CD8-positive, alpha-beta T cell (primary cell): ENCODE measurements at regions of chr13 and their contacts with region 1.

Region 1: GRCh38 chr13:113672002-113672651 is 5.1 kb downstream of the GRK1 start:
- DNase-seq: peak in 1 of 9 experiments; percentile 1
- ATAC-seq: no peak
- H3K4me3 ChIP-seq: no peak overlapping the region
- H3K4me3 Mint-ChIP-seq: no peak overlapping the region
- H3K27ac ChIP-seq: no peak overlapping the region
- H3K27ac Mint-ChIP-seq: no peak overlapping the region
- H3K4me1 ChIP-seq: no peaks in the 10 kb centered on the region
- H3K4me1 Mint-ChIP-seq: peaks cover 3% of the 10 kb centered on the region
- H3K27me3 ChIP-seq: no peaks in the 10 kb centered on the region
- H3K27me3 Mint-ChIP-seq: no peaks in the 10 kb centered on the region
- CTCF ChIP-seq: no peak

Region 2: GRCh38 chr13:113724780-113725315 is 52.7 kb after region 1 on chr13:
- CTCF ChIA-PET with region 1: interaction called, 15 read pairs
- POLR2A ChIA-PET with region 1: no interaction called
- intact Hi-C with region 1: no loop called
- DNase-seq: peak; percentile 75 to 92 (median 87)
- ATAC-seq: peak; percentile 92
- H3K4me3 ChIP-seq: peak overlapping the region; percentile 57 to 78
- H3K4me3 Mint-ChIP-seq: peak overlapping the region; percentile 82
- H3K27ac ChIP-seq: peak overlapping the region; percentile 58 to 60
- H3K27ac Mint-ChIP-seq: peak overlapping the region; percentile 91
- H3K4me1 ChIP-seq: peaks cover 16% of the 10 kb centered on the region
- H3K4me1 Mint-ChIP-seq: peaks cover 13% of the 10 kb centered on the region
- H3K27me3 ChIP-seq: no peaks in the 10 kb centered on the region
- H3K27me3 Mint-ChIP-seq: peaks cover 5% of the 10 kb centered on the region
- CTCF ChIP-seq: peak; percentile 74

Region 3: DNA sequence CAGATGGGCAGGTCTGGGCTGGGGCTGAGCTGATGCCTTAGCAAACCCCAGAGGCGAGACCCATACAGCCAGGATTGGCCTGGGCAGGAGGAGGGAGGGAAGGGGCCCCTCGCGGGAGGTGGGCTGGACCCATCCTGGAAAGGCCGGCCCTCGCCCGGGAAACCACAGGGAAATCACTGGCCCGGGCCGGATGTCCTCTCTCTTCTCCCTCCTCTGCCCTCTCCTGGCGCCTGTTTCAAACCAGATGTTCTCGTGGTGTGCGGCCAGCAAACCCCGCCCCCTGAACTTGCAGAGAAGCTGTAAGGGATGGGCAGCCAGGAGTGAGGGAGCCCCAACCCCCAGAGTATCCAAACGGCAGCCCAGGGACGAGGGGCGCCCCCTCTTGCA is 130.0 kb after region 1 on chr13:
- CTCF ChIA-PET with region 1: no interaction called
- POLR2A ChIA-PET with region 1: no interaction called
- intact Hi-C with region 1: no loop called
- DNase-seq: no peak
- ATAC-seq: no peak
- H3K4me3 ChIP-seq: no peak overlapping the region
- H3K4me3 Mint-ChIP-seq: no peak overlapping the region
- H3K27ac ChIP-seq: no peak overlapping the region
- H3K27ac Mint-ChIP-seq: no peak overlapping the region
- H3K4me1 ChIP-seq: no peaks in the 10 kb centered on the region
- H3K4me1 Mint-ChIP-seq: no peaks in the 10 kb centered on the region
- H3K27me3 ChIP-seq: no peaks in the 10 kb centered on the region
- H3K27me3 Mint-ChIP-seq: no peaks in the 10 kb centered on the region
- CTCF ChIP-seq: no peak